Head of caudate nucleus (tissue), 42 donors: ENCODE measurements at regions of chr1 and their contacts with region 1.

Region 1: GRCh38 chr1:110766025-110766647 is 91.4 kb upstream of the KCNA3 start:
- DNase-seq: peak in 38 of 42 donors; percentile 18 to 83 (median 62)

Region 2: GRCh38 chr1:110524311-110525251 is 241.6 kb before region 1 on chr1:
- intact Hi-C with region 1: loop called (anchors 10 kb)
- DNase-seq: peak; percentile 35 to 89 (median 74)

Region 3: DNA sequence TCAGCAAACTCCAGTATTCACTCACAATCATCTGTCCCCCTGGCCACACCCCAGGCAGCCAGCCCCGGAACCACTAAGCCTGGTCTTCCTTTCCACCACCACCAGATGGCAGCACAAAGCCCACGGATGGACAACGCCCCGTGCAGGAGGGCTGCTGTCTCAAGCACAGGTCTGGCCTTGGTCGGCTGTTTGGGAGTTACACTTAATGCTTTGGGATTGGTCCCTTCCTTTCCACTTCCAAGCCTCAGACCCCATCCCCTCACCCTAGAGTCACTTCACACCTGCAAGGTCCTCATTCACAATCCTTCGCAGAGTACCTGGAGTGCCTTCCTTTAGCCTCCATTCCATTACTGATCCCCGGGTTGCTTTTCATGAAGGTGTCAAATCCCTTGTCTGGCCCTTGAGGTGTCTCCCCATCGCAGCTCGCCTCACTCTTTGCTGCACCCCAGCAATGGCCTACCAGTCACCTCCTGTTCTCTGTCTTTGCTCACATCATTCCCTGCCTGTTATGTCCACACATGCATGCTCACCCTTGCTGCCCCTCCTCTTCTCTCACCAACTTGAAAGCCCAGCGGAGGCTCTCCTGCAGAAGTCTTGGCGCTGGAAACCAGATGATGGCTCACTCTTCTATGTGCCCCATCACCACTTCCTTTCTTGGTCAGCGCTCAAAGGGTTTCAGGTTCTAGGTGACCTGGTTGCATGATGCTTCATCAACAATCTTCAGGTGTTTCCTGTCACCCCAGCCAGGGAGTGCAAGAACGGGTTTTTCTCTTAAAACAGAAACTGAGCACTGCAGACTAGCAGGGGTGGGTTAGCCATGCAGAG is 135.1 kb before region 1 on chr1:
- intact Hi-C with region 1: loop called (anchors 5 kb)
- DNase-seq: peak; percentile 58 to 90 (median 78)